GM12878 (cell line): ENCODE measurements at regions of chr9 and their contacts with region 1.

Region 1: GRCh38 chr9:36337865-36338264 is 62.2 kb downstream of the RNF38 start:
- DNase-seq: no peak
- ATAC-seq: no peak
- H3K4me3 ChIP-seq: no peak overlapping the region
- H3K27ac ChIP-seq: no peak overlapping the region
- H3K4me1 ChIP-seq: peaks cover 4% of the 10 kb centered on the region; the same call in 1 of the 2 replicates
- H3K27me3 ChIP-seq: no peaks in the 10 kb centered on the region
- CTCF ChIP-seq: no peak
- EP300 ChIP-seq: no peak
- POLR2A ChIP-seq: no peak
- RAD21 ChIP-seq: no peak

Region 2: GRCh38 chr9:36110434-36110833 is 227.4 kb before region 1 on chr9:
- CTCF ChIA-PET with region 1: no interaction called
- POLR2A ChIA-PET with region 1: no interaction called
- RAD21 ChIA-PET with region 1: no interaction called
- SMC1A ChIA-PET with region 1: no interaction called
- in situ Hi-C with region 1: no loop called
- intact Hi-C with region 1: no loop called
- DNase-seq: no peak
- ATAC-seq: no peak
- H3K4me3 ChIP-seq: no peak overlapping the region
- H3K27ac ChIP-seq: no peak overlapping the region
- H3K4me1 ChIP-seq: no peaks in the 10 kb centered on the region
- H3K27me3 ChIP-seq: no peaks in the 10 kb centered on the region
- CTCF ChIP-seq: peak in 1 of 3 experiments; percentile 11; a peak in 2 of 6 replicates
- EP300 ChIP-seq: no peak
- POLR2A ChIP-seq: no peak
- RAD21 ChIP-seq: 0 out of 2 replicates have a peak, but pooled peaks have one; percentile 13

Region 3: DNA sequence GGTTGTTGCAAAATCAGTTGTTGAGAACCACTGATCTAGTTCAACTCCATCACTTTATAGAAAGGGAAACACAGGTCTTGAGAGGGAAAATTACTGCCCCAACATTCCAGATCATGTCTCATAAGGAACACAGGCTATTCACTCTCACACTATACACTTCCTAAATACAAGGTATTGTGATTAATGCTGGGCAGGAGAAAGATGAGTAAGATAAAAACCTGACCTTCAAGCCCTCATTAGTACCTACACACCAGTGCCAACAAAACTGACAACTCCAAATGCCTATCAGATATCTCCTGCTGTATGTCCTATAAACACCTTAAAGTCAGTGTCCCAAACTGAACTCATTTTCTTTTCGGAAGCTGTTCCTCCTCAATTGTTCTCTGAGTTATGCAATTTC is 87.8 kb before region 1 on chr9:
- CTCF ChIA-PET with region 1: interaction called, 10 read pairs
- POLR2A ChIA-PET with region 1: no interaction called
- RAD21 ChIA-PET with region 1: interaction called, 3 read pairs
- SMC1A ChIA-PET with region 1: no interaction called
- in situ Hi-C with region 1: no loop called
- intact Hi-C with region 1: no loop called
- DNase-seq: no peak
- ATAC-seq: peak; percentile 56
- H3K4me3 ChIP-seq: no peak overlapping the region
- H3K27ac ChIP-seq: no peak overlapping the region
- H3K4me1 ChIP-seq: peaks cover 22% of the 10 kb centered on the region
- H3K27me3 ChIP-seq: no peaks in the 10 kb centered on the region
- CTCF ChIP-seq: no peak
- EP300 ChIP-seq: no peak
- POLR2A ChIP-seq: no peak
- RAD21 ChIP-seq: no peak

Region 4: DNA sequence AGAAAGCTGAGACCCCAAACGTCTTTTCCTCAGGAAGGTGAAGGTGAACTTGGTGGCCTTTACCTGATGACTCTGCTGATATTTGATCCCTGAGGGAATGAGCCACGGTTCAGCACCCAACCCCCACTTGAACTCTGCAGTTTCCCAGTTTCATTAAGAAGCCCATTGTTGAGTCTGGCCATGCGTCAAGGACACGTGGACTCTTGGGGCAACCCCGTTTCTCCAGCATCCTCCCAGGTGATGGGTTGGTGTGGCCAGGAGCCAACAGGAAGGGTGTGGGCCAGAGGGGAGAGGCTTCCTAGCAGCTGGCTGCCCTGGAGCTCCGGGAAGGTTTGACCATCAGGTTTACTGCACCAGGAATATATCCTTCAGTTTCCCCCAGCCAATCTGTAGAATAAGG is 20.1 kb before region 1 on chr9:
- CTCF ChIA-PET with region 1: no interaction called
- POLR2A ChIA-PET with region 1: no interaction called
- RAD21 ChIA-PET with region 1: no interaction called
- SMC1A ChIA-PET with region 1: no interaction called
- in situ Hi-C with region 1: no loop called
- intact Hi-C with region 1: no loop called
- DNase-seq: no peak
- ATAC-seq: no peak
- H3K4me3 ChIP-seq: no peak overlapping the region
- H3K27ac ChIP-seq: no peak overlapping the region
- H3K4me1 ChIP-seq: no peaks in the 10 kb centered on the region
- H3K27me3 ChIP-seq: no peaks in the 10 kb centered on the region
- CTCF ChIP-seq: no peak
- EP300 ChIP-seq: no peak
- POLR2A ChIP-seq: no peak
- RAD21 ChIP-seq: no peak

Region 5: DNA sequence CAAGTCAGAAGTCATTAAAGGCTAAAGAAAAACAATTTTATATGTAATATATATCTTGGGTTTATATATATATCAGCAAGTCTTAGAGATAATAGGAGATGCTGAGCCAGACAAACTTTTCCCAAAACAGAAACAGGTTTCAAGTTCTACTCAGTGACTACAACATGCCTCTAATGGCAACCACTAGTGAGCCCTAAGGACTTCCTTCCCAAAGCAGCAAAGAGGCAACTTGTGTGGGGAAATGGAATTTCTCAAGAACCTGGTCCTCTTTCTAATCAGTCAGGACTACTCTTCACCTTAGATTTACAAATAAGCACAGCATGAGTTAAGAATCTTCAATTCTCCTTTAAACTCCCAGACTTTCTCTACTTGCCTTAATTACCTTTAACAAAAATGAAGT is 44.6 kb after region 1 on chr9:
- CTCF ChIA-PET with region 1: no interaction called
- POLR2A ChIA-PET with region 1: no interaction called
- RAD21 ChIA-PET with region 1: no interaction called
- SMC1A ChIA-PET with region 1: no interaction called
- in situ Hi-C with region 1: no loop called
- intact Hi-C with region 1: no loop called
- DNase-seq: no peak
- ATAC-seq: peak; percentile 12; the same call in 1 of the 3 replicates
- H3K4me3 ChIP-seq: no peak overlapping the region
- H3K27ac ChIP-seq: peak overlapping the region; percentile 55; the same call in 1 of the 2 replicates
- H3K4me1 ChIP-seq: peaks cover 38% of the 10 kb centered on the region
- H3K27me3 ChIP-seq: no peaks in the 10 kb centered on the region
- CTCF ChIP-seq: no peak
- EP300 ChIP-seq: no peak
- POLR2A ChIP-seq: no peak
- RAD21 ChIP-seq: no peak